Posterior vena cava (tissue), 2 donors: ENCODE measurements at regions of chrX and their contacts with region 1.

Region 1: DNA sequence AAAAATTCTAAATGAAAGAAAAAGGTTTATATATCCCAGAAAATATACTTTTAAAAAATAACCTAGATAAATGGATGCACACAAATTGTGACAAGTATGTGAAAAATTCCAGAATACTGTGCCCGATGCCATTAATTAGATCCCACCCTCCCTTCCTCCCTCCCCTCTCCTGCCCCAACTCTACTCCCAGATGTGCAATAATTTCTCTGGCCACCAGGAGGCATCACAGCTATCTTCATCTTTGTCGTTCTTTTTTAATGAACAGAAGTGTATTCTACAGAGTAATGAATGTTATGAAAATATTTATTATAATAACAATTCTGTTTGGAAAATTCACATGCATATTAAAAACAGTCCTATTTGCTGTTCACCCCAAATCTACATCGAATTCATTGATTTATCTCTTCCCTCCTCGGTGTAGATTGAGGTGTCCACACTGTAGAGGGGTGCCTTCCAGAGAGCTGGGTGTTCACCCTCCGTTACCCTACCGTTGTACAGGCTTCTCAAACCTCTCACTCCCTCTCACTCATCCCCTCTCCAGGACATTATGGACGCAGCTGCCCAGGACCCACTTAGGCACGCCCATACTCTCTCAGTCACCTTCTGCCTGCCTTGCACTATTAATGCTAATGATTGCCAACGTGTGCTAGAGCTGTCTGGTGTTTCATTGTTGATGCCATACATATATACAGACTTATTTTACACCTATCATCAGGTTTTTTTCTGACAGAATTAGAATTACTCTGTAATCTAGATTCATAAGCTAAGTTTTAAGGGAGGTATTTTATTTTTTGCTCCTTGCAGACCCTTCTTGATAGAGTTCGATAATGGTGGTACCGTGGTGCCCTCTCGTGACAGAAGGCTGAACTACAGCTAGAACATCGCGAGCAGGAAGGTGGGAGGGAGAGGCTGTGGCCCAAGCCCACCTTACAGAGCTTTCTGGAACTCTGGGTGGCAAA is 14.1 kb downstream of the RAB40AL start:
- DNase-seq: no peak

Region 2: GRCh38 chrX:103175944-103176753 is 225.0 kb after region 1 on chrX:
- intact Hi-C with region 1: loop called in 1 of 2 experiments (anchors 10 kb)
- DNase-seq: peak; percentile 85